Dendritic cell treated with granulocyte-macrophage colony-stimulating factor and Interleukin-4, amounts not matched to agents 40 ng/mL and 50 ng/mL, for 4 days (primary cell): ENCODE measurements at regions of chr1 and their contacts with region 1.

Region 1: GRCh38 chr1:221097479-221098383 is 218.5 kb downstream of the HLX start:
- H3K4me3 Mint-ChIP-seq: peak overlapping the region; percentile 1
- H3K27ac Mint-ChIP-seq: peak overlapping the region; percentile 92
- H3K4me1 Mint-ChIP-seq: peaks cover 72% of the 10 kb centered on the region
- H3K27me3 Mint-ChIP-seq: peaks cover 5% of the 10 kb centered on the region

Region 2: GRCh38 chr1:220999872-221000863 is 97.6 kb before region 1 on chr1:
- intact Hi-C with region 1: loop called (anchors 2 kb)
- H3K4me3 Mint-ChIP-seq: no peak overlapping the region
- H3K27ac Mint-ChIP-seq: no peak overlapping the region
- H3K4me1 Mint-ChIP-seq: no peaks in the 10 kb centered on the region
- H3K27me3 Mint-ChIP-seq: peaks cover 23% of the 10 kb centered on the region

Region 3: DNA sequence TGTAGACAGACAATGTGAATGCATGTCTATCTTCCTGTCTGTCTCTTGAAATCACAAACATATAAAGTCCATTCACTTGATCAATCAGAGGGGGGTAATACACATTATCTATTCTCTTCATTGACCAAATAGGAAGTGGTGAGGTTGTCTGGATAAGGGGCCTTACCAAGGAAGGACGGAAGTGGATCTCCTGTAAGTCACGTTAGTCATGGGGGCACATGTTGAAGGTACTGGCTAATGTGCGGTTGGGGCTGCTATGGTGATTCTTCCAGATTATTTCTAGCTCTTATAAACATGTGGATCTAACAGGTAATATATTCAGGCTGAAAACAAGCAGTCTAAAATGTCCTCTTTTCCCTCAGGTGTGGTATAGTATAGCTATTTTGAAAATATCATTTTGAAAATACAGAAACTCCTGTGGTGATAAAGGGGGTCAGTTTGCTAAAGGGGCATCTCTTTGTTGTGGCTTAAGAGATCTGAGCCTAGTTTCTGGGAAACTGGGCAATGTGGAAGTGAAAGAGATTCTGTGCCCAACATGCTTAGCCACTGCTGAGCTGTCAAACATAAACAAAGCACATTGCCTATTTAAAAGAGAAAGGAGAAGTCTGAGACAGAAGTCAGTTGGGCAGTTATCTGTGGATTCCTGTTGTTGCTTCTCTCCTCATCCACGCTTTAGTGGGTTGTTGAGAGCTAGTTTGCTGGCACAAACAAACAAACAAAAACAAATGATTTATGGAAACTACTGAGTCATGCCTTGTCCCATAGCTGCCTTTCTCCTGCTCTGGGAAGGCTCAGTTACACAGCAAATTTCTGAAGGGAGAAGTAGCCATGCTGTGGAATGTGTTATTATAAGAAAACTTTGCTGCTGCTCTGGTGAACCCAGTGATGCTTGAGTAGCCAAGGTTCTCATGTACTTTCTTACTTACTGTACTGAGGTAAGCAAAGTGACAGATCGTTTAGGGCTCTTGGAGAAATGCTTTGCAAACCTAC is 51.6 kb before region 1 on chr1:
- intact Hi-C with region 1: loop called (anchors 1 kb)
- H3K4me3 Mint-ChIP-seq: no peak overlapping the region
- H3K27ac Mint-ChIP-seq: peak overlapping the region; percentile 91
- H3K4me1 Mint-ChIP-seq: peaks cover 56% of the 10 kb centered on the region
- H3K27me3 Mint-ChIP-seq: no peaks in the 10 kb centered on the region

Region 4: DNA sequence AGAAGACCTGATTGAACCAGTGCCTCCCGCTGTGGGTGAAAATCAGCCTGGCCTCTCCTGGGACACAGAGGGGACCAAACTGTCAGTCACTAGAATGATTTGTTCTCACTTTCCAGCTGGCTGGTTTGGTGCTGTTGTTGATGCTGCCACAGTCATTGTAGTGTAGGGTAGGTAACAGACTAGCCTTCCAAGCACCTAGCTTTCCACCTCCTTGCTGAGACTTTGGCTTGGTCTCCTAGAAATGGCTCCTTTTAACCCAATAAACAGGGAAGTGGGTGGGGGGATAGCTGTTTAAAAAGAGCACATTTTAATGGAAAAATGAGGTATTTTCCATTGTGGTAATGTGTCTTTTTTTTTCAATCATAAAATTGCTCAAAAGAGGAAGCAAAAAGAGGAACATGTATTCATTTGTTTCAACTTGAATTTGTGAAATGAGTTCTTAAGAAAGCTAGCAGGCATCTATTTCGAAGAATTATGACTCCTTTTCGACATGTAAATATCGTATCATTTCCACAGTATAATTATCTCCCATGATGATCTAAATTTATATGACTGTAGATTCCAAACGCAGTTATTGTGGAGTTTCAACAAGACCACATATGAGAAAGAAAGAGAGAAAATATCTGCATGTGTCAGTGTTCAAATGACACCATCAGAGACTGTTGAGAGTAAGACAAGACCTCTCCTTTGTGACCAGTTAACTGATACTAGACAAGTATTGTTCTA is 28.4 kb before region 1 on chr1:
- intact Hi-C with region 1: loop called (anchors 1 kb)
- H3K4me3 Mint-ChIP-seq: peak overlapping the region; percentile 20
- H3K27ac Mint-ChIP-seq: peak overlapping the region; percentile 95
- H3K4me1 Mint-ChIP-seq: peaks cover 82% of the 10 kb centered on the region
- H3K27me3 Mint-ChIP-seq: peaks cover 2% of the 10 kb centered on the region

Region 5: GRCh38 chr1:221166559-221167318 is 69.0 kb after region 1 on chr1:
- intact Hi-C with region 1: loop called (anchors 2 kb)
- H3K4me3 Mint-ChIP-seq: no peak overlapping the region
- H3K27ac Mint-ChIP-seq: peak overlapping the region; percentile 81
- H3K4me1 Mint-ChIP-seq: peaks cover 58% of the 10 kb centered on the region
- H3K27me3 Mint-ChIP-seq: peaks cover 48% of the 10 kb centered on the region